Calu3 (cell line): ENCODE measurements at regions of chr3 and their contacts with region 1.

Region 1: GRCh38 chr3:27134165-27134796 is 234.9 kb downstream of the NEK10 start:
- DNase-seq: peak; percentile 70
- H3K4me3 Mint-ChIP-seq: no peak overlapping the region
- H3K27ac Mint-ChIP-seq: no peak overlapping the region
- H3K4me1 Mint-ChIP-seq: peaks cover 19% of the 10 kb centered on the region
- H3K27me3 Mint-ChIP-seq: no peaks in the 10 kb centered on the region
- CTCF ChIP-seq: peak; percentile 79

Region 2: DNA sequence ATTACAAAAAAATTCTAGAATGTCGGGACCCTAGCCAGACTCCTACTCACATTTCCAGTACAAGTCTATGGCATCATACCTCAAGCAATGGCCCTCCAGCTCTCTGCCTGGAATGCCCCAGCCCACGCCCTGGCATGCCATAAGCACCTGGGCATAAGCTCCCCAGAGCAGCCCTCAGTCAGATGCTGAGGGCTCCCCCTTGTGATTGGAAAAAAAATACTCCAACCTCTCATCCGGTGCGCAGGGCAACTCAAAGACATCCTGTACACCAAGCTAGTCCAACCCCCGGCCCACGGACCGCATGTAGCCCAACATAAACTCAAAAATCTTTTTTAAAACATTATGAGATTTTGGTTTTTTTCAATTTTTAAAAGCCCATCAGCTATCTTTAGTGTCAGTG is 119.5 kb after region 1 on chr3:
- CTCF ChIA-PET with region 1: interaction called, 55 read pairs
- intact Hi-C with region 1: loop called (anchors 1 kb)
- DNase-seq: peak; percentile 73
- H3K4me3 Mint-ChIP-seq: no peak overlapping the region
- H3K27ac Mint-ChIP-seq: no peak overlapping the region
- H3K4me1 Mint-ChIP-seq: peaks cover 10% of the 10 kb centered on the region
- H3K27me3 Mint-ChIP-seq: no peaks in the 10 kb centered on the region
- CTCF ChIP-seq: peak; percentile 56

Region 3: GRCh38 chr3:27279123-27279522 is 144.8 kb after region 1 on chr3:
- CTCF ChIA-PET with region 1: interaction called, 3 read pairs
- intact Hi-C with region 1: loop called (anchors 1 kb)
- DNase-seq: no peak
- H3K4me3 Mint-ChIP-seq: no peak overlapping the region
- H3K27ac Mint-ChIP-seq: no peak overlapping the region
- H3K4me1 Mint-ChIP-seq: peaks cover 8% of the 10 kb centered on the region
- H3K27me3 Mint-ChIP-seq: no peaks in the 10 kb centered on the region
- CTCF ChIP-seq: no peak

Region 4: GRCh38 chr3:27458929-27459328 is 324.6 kb after region 1 on chr3:
- CTCF ChIA-PET with region 1: no interaction called
- intact Hi-C with region 1: no loop called
- DNase-seq: no peak
- H3K4me3 Mint-ChIP-seq: no peak overlapping the region
- H3K27ac Mint-ChIP-seq: no peak overlapping the region
- H3K4me1 Mint-ChIP-seq: no peaks in the 10 kb centered on the region
- H3K27me3 Mint-ChIP-seq: no peaks in the 10 kb centered on the region
- CTCF ChIP-seq: no peak

Region 5: GRCh38 chr3:27960133-27960532 is 825.9 kb after region 1 on chr3:
- CTCF ChIA-PET with region 1: no interaction called
- intact Hi-C with region 1: no loop called
- DNase-seq: no peak
- H3K4me3 Mint-ChIP-seq: no peak overlapping the region
- H3K27ac Mint-ChIP-seq: no peak overlapping the region
- H3K4me1 Mint-ChIP-seq: no peaks in the 10 kb centered on the region
- H3K27me3 Mint-ChIP-seq: no peaks in the 10 kb centered on the region
- CTCF ChIP-seq: no peak